ENCODE measurements at regions of chr9 and their contacts with region 1.

Region 1: GRCh38 chr9:126781186-126782052 is 23.4 kb upstream of the ZBTB43 start:
- DNase-seq: peak; percentile 91
- ATAC-seq: peak; percentile 85

Region 2: GRCh38 chr9:126270556-126270955 is 510.9 kb before region 1 on chr9:
- intact Hi-C with region 1: no loop called
- DNase-seq: no peak
- ATAC-seq: no peak

Region 3: DNA sequence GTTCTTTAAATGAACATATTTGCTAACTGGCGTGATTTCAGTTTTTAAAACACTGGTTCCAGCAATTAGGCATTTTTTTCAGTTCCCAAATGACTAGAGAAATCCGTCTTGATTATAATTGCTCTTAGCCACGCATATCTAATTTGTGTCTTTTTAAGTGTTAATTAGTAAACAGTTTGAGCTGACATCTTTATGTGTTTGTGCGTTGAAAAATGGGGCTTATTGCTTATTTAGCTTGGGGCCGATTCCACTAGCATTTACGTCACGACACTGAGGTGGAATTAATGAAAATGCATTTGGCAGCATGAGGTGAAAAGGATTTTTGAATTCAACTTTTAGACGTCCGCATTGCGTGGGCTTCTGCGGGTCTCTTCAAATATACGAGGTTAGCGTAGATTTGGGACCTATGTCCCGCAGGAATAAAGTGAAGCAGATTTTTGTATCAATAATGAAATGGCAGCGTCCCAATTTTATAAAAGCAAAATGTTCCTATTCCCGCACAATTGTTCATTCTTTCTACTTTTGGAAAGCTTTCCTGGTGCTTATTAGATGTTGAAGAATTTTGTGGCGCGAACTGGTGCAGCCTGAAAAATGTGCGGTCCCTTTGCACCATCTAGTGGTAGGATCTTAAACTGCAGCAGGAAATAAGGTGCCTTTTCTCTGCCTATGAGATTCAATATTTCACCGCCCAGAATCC is 290.4 kb before region 1 on chr9:
- intact Hi-C with region 1: loop called (anchors 10 kb)
- DNase-seq: no peak
- ATAC-seq: peak; percentile 68

Region 4: GRCh38 chr9:126611592-126612325 is 169.7 kb before region 1 on chr9:
- intact Hi-C with region 1: loop called (anchors 10 kb)
- DNase-seq: peak; percentile 85
- ATAC-seq: peak; percentile 93

Region 5: DNA sequence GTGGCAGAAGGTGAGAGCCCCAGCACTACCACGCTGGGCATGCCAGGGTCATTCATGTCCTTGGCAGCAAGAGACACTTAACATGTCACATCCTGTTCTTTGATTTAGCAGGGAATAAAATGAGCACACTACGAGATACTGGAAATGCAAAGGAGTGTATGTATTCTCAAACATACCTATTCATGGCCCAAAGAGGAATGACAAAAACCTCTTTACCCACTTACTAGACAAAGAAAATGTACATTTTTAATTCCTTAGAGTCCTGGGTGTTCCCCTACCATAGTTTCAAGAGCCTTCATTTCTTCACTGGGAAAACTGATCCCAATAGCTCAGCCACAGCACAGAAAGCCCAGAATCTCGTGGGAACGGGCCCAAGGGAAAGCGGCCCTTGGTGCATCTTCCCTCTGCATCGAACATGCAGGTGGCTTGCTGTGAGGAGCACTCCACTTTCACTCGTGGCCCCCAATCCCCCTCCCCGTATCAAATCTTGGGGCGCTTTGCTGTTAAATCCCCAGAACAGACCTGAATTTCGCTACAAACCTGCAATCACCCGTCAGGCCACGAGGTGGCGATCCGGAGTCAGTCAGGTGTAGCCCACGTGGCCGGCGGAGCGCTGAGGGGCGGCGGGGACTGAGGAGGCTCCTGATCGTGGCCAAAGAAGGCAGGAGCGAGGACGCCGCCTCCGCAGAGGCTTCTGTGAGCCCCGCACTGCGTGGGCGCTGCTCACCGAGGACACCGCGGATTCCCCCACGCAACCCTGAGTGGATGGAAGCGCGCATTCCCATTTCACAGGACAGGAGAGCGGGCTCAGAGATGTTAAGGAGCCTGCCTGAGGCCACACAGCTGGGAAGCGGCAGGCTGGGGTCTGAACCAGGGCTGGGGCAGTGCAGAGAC is 76.3 kb before region 1 on chr9:
- intact Hi-C with region 1: loop called (anchors 5 kb)
- DNase-seq: peak; percentile 87
- ATAC-seq: peak; percentile 81